AG04450 (cell line): ENCODE measurements at regions of chr6 and their contacts with region 1.

Region 1: GRCh38 chr6:34248727-34249551 is at the start of gene SMIM29:
- DNase-seq: peak; percentile 87
- H3K4me3 ChIP-seq: peak within 1 kb of the TSS; percentile 91
- H3K27ac ChIP-seq: peak within 1 kb of the TSS; percentile 47
- H3K27me3 ChIP-seq: no peaks in the 10 kb centered on the region
- CTCF ChIP-seq: peak; percentile 80
- polyA plus RNA-seq, gene SMIM29: 11.3 and 17.2 TPM in 2 replicates

Region 2: GRCh38 chr6:34386316-34387137 is 137.6 kb after region 1 on chr6:
- CTCF ChIA-PET with region 1: interaction called, 18 read pairs
- POLR2A ChIA-PET with region 1: interaction called, 3 read pairs
- DNase-seq: peak; percentile 70
- H3K4me3 ChIP-seq: no peak overlapping the region
- H3K27ac ChIP-seq: no peak overlapping the region
- H3K27me3 ChIP-seq: no peaks in the 10 kb centered on the region
- CTCF ChIP-seq: no peak

Region 3: GRCh38 chr6:34414999-34415858 is 166.3 kb after region 1 on chr6:
- CTCF ChIA-PET with region 1: interaction called, 30 read pairs
- POLR2A ChIA-PET with region 1: interaction called, 12 read pairs
- DNase-seq: no peak
- H3K4me3 ChIP-seq: no peak overlapping the region
- H3K27ac ChIP-seq: no peak overlapping the region
- H3K27me3 ChIP-seq: no peaks in the 10 kb centered on the region
- CTCF ChIP-seq: peak; percentile 31; the same call in 1 of the 2 replicates

Region 4: DNA sequence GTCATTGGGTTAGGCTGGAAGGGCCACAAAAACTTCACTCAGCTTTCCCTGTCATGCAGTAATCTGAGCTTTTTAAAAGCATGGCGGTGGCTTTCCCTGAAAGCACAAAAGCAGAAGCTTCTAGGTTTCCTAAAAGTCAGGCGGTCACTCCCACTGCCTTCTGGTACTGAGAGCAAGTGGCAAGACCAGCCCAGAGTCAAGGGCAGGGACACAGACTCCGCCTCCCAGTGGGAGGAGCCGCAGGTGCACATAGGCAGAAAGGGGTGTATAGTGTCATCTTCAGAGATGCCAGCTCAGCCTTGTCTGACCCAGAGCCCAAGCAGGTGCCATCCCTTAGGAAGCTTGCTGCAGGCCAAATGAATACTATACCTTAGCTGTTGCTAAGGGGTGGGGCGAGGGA is 199.0 kb after region 1 on chr6:
- CTCF ChIA-PET with region 1: interaction called, 11 read pairs
- POLR2A ChIA-PET with region 1: no interaction called
- DNase-seq: no peak
- H3K4me3 ChIP-seq: no peak overlapping the region
- H3K27ac ChIP-seq: no peak overlapping the region
- H3K27me3 ChIP-seq: peaks cover 5% of the 10 kb centered on the region
- CTCF ChIP-seq: no peak